ENCODE measurements at regions of chr4 and their contacts with region 1.

Region 1: GRCh38 chr4:74531963-74532794 is 87.2 kb downstream of the AREG start:
- DNase-seq: peak; percentile 22
- H3K4me3 ChIP-seq: no peak overlapping the region
- H3K27ac ChIP-seq: no peak overlapping the region
- H3K4me1 ChIP-seq: no peaks in the 10 kb centered on the region
- CTCF ChIP-seq: peak; percentile 70

Region 2: GRCh38 chr4:74376888-74377483 is 155.2 kb before region 1 on chr4:
- CTCF ChIA-PET with region 1: no interaction called
- POLR2A ChIA-PET with region 1: no interaction called
- intact Hi-C with region 1: loop called (anchors 5 kb)
- DNase-seq: peak; percentile 11
- H3K4me3 ChIP-seq: no peak overlapping the region
- H3K27ac ChIP-seq: no peak overlapping the region
- H3K4me1 ChIP-seq: no peaks in the 10 kb centered on the region
- CTCF ChIP-seq: peak; percentile 71